Mammary epithelial cell (primary cell): ENCODE measurements at regions of chr10 and their contacts with region 1.

Region 1: GRCh38 chr10:130127364-130128061 is 8.7 kb upstream of the GLRX3 start:
- DNase-seq: peak; percentile 66
- H3K4me3 ChIP-seq: no peak overlapping the region
- H3K27ac ChIP-seq: no peak overlapping the region
- H3K4me1 ChIP-seq: no peaks in the 10 kb centered on the region
- H3K27me3 ChIP-seq: peaks cover 3% of the 10 kb centered on the region
- CTCF ChIP-seq: peak; percentile 93 to 94

Region 2: GRCh38 chr10:129030996-129031843 is 1096.3 kb before region 1 on chr10:
- CTCF ChIA-PET with region 1: no interaction called
- dilution Hi-C with region 1: no loop called
- in situ Hi-C with region 1: no loop called
- intact Hi-C with region 1: loop called (anchors 5 kb)
- DNase-seq: peak; percentile 1
- H3K4me3 ChIP-seq: no peak overlapping the region
- H3K27ac ChIP-seq: no peak overlapping the region
- H3K4me1 ChIP-seq: no peaks in the 10 kb centered on the region
- H3K27me3 ChIP-seq: no peaks in the 10 kb centered on the region
- CTCF ChIP-seq: peak; percentile 22 to 41

Region 3: GRCh38 chr10:130519791-130520190 is 392.3 kb after region 1 on chr10:
- CTCF ChIA-PET with region 1: no interaction called
- dilution Hi-C with region 1: no loop called
- in situ Hi-C with region 1: no loop called
- intact Hi-C with region 1: no loop called
- DNase-seq: no peak
- H3K4me3 ChIP-seq: no peak overlapping the region
- H3K27ac ChIP-seq: no peak overlapping the region
- H3K4me1 ChIP-seq: no peaks in the 10 kb centered on the region
- H3K27me3 ChIP-seq: no peaks in the 10 kb centered on the region
- CTCF ChIP-seq: no peak